ENCODE measurements at regions of chr14 and their contacts with region 1.

Region 1: GRCh38 chr14:50038398-50039119 is 77.8 kb downstream of the VCPKMT start:
- DNase-seq: peak; percentile 60 to 64
- ATAC-seq: peak; percentile 75 to 84
- H3K4me3 ChIP-seq: no peak overlapping the region
- H3K27ac ChIP-seq: peak overlapping the region; percentile 71 to 80; a peak in 5 of 6 replicates
- H3K4me1 ChIP-seq: peaks cover 31% of the 10 kb centered on the region
- CTCF ChIP-seq: no peak; the same call in 2 of the 3 replicates
- EP300 ChIP-seq: no peak
- POLR2A ChIP-seq: no peak
- RAD21 ChIP-seq: peak; percentile 19 to 25; a peak in 1 of 5 replicates

Region 2: DNA sequence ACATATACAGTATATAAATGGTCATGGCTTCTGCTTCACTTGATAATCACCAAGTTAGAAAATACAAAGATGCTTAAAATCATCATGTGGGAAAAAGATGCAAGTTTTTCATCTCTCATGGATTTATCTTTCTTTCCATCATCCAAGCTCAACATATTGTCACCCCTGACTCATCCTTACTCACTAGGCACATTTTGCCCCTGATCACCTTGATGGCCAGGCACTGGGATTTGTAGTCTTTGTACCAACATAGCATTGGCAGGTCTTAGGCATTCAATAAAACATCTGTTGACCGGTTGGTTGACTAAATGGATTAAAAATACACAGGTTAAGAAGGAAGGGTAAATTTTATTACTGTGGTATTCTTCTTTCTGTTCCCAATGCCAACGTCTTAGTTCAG is 242.5 kb before region 1 on chr14:
- CTCF ChIA-PET with region 1: no interaction called
- POLR2A ChIA-PET with region 1: no interaction called
- DNase-seq: no peak
- ATAC-seq: no peak
- H3K4me3 ChIP-seq: no peak overlapping the region
- H3K27ac ChIP-seq: no peak overlapping the region
- H3K4me1 ChIP-seq: no peaks in the 10 kb centered on the region
- CTCF ChIP-seq: no peak
- EP300 ChIP-seq: no peak
- POLR2A ChIP-seq: no peak
- RAD21 ChIP-seq: no peak

Region 3: GRCh38 chr14:50025776-50026175 is 12.8 kb before region 1 on chr14:
- CTCF ChIA-PET with region 1: interaction called, 12 read pairs
- POLR2A ChIA-PET with region 1: interaction called, 5 read pairs
- DNase-seq: peak in 1 of 2 experiments; percentile 45
- ATAC-seq: no peak
- H3K4me3 ChIP-seq: no peak overlapping the region
- H3K27ac ChIP-seq: peak overlapping the region; percentile 7 to 92; a peak in 4 of 6 replicates
- H3K4me1 ChIP-seq: peaks cover 21% of the 10 kb centered on the region
- CTCF ChIP-seq: no peak
- EP300 ChIP-seq: no peak
- POLR2A ChIP-seq: no peak
- RAD21 ChIP-seq: no peak

Region 4: DNA sequence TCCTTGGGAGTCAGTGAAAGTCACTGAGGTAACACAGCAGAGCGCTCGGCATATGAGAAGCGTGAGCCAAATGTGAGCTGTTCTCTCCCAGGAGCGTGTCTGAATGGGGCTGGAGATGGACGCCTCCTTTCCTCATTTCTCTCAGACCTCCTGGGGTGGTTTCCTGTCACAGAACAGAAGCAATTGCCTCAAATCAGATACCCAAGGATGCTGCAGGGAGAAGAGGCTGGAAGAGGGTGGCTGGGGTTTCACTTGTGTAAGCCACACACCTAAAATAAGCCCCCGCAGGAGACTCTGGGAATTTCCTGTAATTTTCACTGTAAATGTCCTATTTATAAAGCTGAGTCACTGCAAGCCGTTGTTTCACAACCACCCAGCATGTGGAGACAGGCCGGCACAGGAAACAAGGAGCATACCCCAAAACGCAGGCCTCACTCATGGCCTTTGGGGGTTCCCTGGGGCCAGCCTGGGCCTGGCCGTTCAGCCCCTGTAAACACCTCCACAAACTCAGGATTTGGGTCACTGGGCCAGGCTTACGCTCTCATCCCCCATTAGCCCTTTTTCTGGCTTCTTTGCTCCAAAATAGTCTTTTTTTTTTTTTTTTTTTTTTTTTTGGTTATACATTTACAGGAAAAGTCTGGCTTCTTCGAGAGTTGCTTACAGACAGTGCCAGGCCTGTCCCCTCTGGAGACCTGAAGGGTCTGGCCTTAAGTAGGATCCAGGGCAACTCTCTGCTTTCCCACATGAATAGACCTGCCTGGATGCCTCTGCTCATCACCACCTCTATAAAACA is 22.5 kb after region 1 on chr14:
- CTCF ChIA-PET with region 1: interaction called, 11 read pairs
- POLR2A ChIA-PET with region 1: interaction called, 4 read pairs
- DNase-seq: peak; percentile 86 to 89
- ATAC-seq: peak; percentile 88 to 89
- H3K4me3 ChIP-seq: no peak overlapping the region
- H3K27ac ChIP-seq: peak overlapping the region; percentile 90 to 95
- H3K4me1 ChIP-seq: peaks cover 39% of the 10 kb centered on the region
- CTCF ChIP-seq: no peak
- EP300 ChIP-seq: peak in 1 of 2 experiments; percentile 28; a peak in 1 of 5 replicates
- POLR2A ChIP-seq: no peak
- RAD21 ChIP-seq: peak; percentile 8 to 48; a peak in 4 of 5 replicates

Measured in A549 (cell line).